ENCODE measurements at regions of chr16 and their contacts with region 1.

Region 1: DNA sequence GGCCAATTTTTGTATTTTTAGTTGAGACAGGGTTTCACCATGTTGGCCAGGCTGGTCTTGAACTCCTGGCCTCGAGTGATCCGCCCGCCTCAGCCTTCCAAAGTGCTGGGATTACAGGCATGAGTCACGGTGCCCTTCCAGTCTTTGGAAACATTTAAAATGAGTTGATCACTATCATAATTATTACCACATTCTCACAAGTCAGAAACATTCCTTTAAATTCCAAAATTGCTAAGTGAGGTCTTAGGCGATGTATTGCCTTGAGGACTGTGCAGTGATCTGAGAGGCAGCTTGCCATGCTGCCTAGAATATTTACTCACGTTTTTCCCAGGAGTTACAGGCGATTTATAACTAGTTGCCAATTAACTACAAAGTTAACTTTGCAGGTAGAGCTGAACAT is 5.8 kb upstream of the ATXN1L start:
- DNase-seq: peak in 1 of 2 experiments; percentile 48
- H3K4me3 ChIP-seq: no peak overlapping the region
- H3K27ac ChIP-seq: no peak overlapping the region
- H3K4me1 ChIP-seq: no peaks in the 10 kb centered on the region
- H3K27me3 ChIP-seq: no peaks in the 10 kb centered on the region
- CTCF ChIP-seq: no peak

Region 2: GRCh38 chr16:70808371-70808770 is 1031.6 kb before region 1 on chr16:
- CTCF ChIA-PET with region 1: no interaction called
- POLR2A ChIA-PET with region 1: interaction called, 12 read pairs
- intact Hi-C with region 1: no loop called
- DNase-seq: no peak
- H3K4me3 ChIP-seq: no peak overlapping the region
- H3K27ac ChIP-seq: no peak overlapping the region
- H3K4me1 ChIP-seq: no peaks in the 10 kb centered on the region
- H3K27me3 ChIP-seq: no peaks in the 10 kb centered on the region
- CTCF ChIP-seq: no peak; the same call in 1 of the 2 replicates

Region 3: GRCh38 chr16:71762186-71762585 is 77.8 kb before region 1 on chr16:
- CTCF ChIA-PET with region 1: no interaction called
- POLR2A ChIA-PET with region 1: no interaction called
- intact Hi-C with region 1: no loop called
- DNase-seq: no peak
- H3K4me3 ChIP-seq: no peak overlapping the region
- H3K27ac ChIP-seq: no peak overlapping the region
- H3K4me1 ChIP-seq: no peaks in the 10 kb centered on the region
- H3K27me3 ChIP-seq: no peaks in the 10 kb centered on the region
- CTCF ChIP-seq: no peak

Region 4: GRCh38 chr16:71781741-71782140 is 58.3 kb before region 1 on chr16:
- CTCF ChIA-PET with region 1: no interaction called
- POLR2A ChIA-PET with region 1: no interaction called
- intact Hi-C with region 1: no loop called
- DNase-seq: peak in 1 of 2 experiments; percentile 72
- H3K4me3 ChIP-seq: no peak overlapping the region
- H3K27ac ChIP-seq: peak overlapping the region; percentile 54
- H3K4me1 ChIP-seq: peaks cover 19% of the 10 kb centered on the region
- H3K27me3 ChIP-seq: no peaks in the 10 kb centered on the region
- CTCF ChIP-seq: no peak

Region 5: DNA sequence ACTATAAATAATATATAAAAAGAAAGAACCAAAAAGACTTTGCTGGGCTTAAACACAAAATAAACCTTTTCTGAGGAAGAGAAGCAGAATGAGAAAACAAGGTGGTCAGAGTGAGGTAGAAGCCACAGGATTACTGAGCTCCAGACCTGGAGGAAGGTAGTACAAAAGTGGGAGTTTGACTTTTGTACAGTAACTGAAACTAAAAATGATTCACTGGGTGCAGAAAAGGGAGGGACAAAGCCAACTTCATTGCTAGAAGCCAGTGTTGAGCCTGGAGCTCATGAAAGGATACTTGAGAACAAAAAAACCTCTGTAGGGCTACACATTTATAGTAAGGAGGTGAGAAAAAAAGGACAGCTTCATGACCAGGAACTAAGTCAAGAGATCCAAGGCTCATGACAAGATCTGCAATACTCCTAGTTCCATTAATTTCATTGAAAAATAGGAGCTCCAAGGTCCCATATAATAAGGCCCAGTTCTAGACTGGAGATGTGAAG is 114.7 kb after region 1 on chr16:
- CTCF ChIA-PET with region 1: no interaction called
- POLR2A ChIA-PET with region 1: no interaction called
- intact Hi-C with region 1: no loop called
- DNase-seq: no peak
- H3K4me3 ChIP-seq: no peak overlapping the region
- H3K27ac ChIP-seq: no peak overlapping the region
- H3K4me1 ChIP-seq: no peaks in the 10 kb centered on the region
- H3K27me3 ChIP-seq: no peaks in the 10 kb centered on the region
- CTCF ChIP-seq: no peak

Region 6: GRCh38 chr16:72025759-72026114 is 185.7 kb after region 1 on chr16:
- CTCF ChIA-PET with region 1: no interaction called
- POLR2A ChIA-PET with region 1: no interaction called
- intact Hi-C with region 1: no loop called
- DNase-seq: no peak
- H3K4me3 ChIP-seq: no peak overlapping the region
- H3K27ac ChIP-seq: no peak overlapping the region
- H3K4me1 ChIP-seq: no peaks in the 10 kb centered on the region
- H3K27me3 ChIP-seq: no peaks in the 10 kb centered on the region
- CTCF ChIP-seq: no peak